GM12878 (cell line): ENCODE measurements at regions of chr11 and their contacts with region 1.

Region 1: GRCh38 chr11:57480409-57481137 is 20.2 kb downstream of the RTN4RL2 start:
- DNase-seq: no peak
- ATAC-seq: peak; percentile 48
- H3K4me3 ChIP-seq: no peak overlapping the region
- H3K27ac ChIP-seq: no peak overlapping the region
- H3K4me1 ChIP-seq: peaks cover 26% of the 10 kb centered on the region
- H3K27me3 ChIP-seq: no peaks in the 10 kb centered on the region
- CTCF ChIP-seq: peak; percentile 71 to 91 (median 86)
- EP300 ChIP-seq: no peak
- POLR2A ChIP-seq: no peak
- RAD21 ChIP-seq: peak; percentile 59

Region 2: GRCh38 chr11:57345555-57346211 is 134.9 kb before region 1 on chr11:
- CTCF ChIA-PET with region 1: interaction called, 31 read pairs
- POLR2A ChIA-PET with region 1: no interaction called
- RAD21 ChIA-PET with region 1: interaction called, 15 read pairs
- SMC1A ChIA-PET with region 1: interaction called, 7 read pairs
- in situ Hi-C with region 1: loop called (anchors 5 kb)
- intact Hi-C with region 1: loop called (anchors 2 kb)
- DNase-seq: no peak
- ATAC-seq: peak; percentile 83
- H3K4me3 ChIP-seq: no peak overlapping the region
- H3K27ac ChIP-seq: no peak overlapping the region
- H3K4me1 ChIP-seq: no peaks in the 10 kb centered on the region; the same call in 1 of the 2 replicates
- H3K27me3 ChIP-seq: peaks cover 0 to 4% of the 10 kb centered on the region in 2 experiments; a peak in 1 of 4 replicates
- CTCF ChIP-seq: peak; percentile 66 to 77 (median 75); a peak in 5 of 6 replicates
- EP300 ChIP-seq: no peak
- POLR2A ChIP-seq: no peak
- RAD21 ChIP-seq: peak; percentile 76

Region 3: DNA sequence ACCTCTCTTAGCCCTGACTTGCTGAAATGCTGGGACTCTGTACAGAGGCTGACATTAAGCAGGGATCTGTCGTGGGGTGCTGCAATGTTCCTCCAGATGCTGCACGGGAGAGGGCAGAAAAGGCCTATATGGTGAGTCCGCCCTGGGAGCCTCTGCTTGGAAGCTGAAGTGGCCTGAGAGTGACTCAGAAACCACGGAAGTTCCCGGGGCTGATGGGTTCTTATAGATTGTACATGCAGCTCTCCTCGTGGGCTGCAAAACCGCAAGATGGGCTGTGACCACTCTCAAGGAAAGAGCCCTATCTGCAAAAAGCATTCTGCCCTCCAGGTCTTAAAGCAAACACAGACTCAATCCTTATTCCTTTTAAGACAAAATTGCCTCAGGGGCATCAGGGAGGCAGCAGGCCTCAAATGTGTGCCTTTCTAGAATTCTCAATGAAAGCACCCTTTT is 47.8 kb before region 1 on chr11:
- CTCF ChIA-PET with region 1: interaction called, 17 read pairs
- POLR2A ChIA-PET with region 1: no interaction called
- RAD21 ChIA-PET with region 1: interaction called, 3 read pairs
- SMC1A ChIA-PET with region 1: interaction called, 3 read pairs
- in situ Hi-C with region 1: no loop called
- intact Hi-C with region 1: loop called (anchors 5 kb)
- DNase-seq: no peak
- ATAC-seq: peak; percentile 74
- H3K4me3 ChIP-seq: no peak overlapping the region
- H3K27ac ChIP-seq: no peak overlapping the region
- H3K4me1 ChIP-seq: peaks cover 6% of the 10 kb centered on the region
- H3K27me3 ChIP-seq: no peaks in the 10 kb centered on the region
- CTCF ChIP-seq: no peak
- EP300 ChIP-seq: no peak
- POLR2A ChIP-seq: no peak
- RAD21 ChIP-seq: no peak

Region 4: GRCh38 chr11:57515332-57516060 is 34.9 kb after region 1 on chr11 and contains the start of gene SLC43A1:
- CTCF ChIA-PET with region 1: interaction called, 18 read pairs
- POLR2A ChIA-PET with region 1: interaction called, 4 read pairs
- RAD21 ChIA-PET with region 1: no interaction called
- SMC1A ChIA-PET with region 1: interaction called, 4 read pairs
- in situ Hi-C with region 1: no loop called
- intact Hi-C with region 1: no loop called
- DNase-seq: no peak
- ATAC-seq: peak; percentile 66
- H3K4me3 ChIP-seq: peak within 1 kb of the TSS; percentile 90
- H3K27ac ChIP-seq: peak within 1 kb of the TSS; percentile 35
- H3K4me1 ChIP-seq: no peaks in the 10 kb centered on the region
- H3K27me3 ChIP-seq: no peaks in the 10 kb centered on the region
- CTCF ChIP-seq: no peak
- EP300 ChIP-seq: no peak
- POLR2A ChIP-seq: peak; percentile 25; the same call in 1 of the 2 replicates
- RAD21 ChIP-seq: no peak
- polyA plus RNA-seq, gene SLC43A1: 1.0 to 2.4 TPM

Region 5: GRCh38 chr11:58354727-58355126 is 874.2 kb after region 1 on chr11:
- CTCF ChIA-PET with region 1: no interaction called
- POLR2A ChIA-PET with region 1: no interaction called
- RAD21 ChIA-PET with region 1: no interaction called
- SMC1A ChIA-PET with region 1: no interaction called
- in situ Hi-C with region 1: no loop called
- intact Hi-C with region 1: no loop called
- DNase-seq: no peak
- ATAC-seq: no peak
- H3K4me3 ChIP-seq: no peak overlapping the region
- H3K27ac ChIP-seq: no peak overlapping the region
- H3K4me1 ChIP-seq: no peaks in the 10 kb centered on the region
- H3K27me3 ChIP-seq: no peaks in the 10 kb centered on the region
- CTCF ChIP-seq: no peak
- EP300 ChIP-seq: no peak
- POLR2A ChIP-seq: no peak
- RAD21 ChIP-seq: no peak